Heart right ventricle (tissue), 16 donors: ENCODE measurements at regions of chr15 and their contacts with region 1.

Region 1: GRCh38 chr15:92797168-92797951 is 102.8 kb upstream of the CHD2 start:
- DNase-seq: peak in 1 of 2 donors; percentile 65
- ATAC-seq: peak in 7 of 8 donors; percentile 59 to 76 (median 63)
- H3K4me3 ChIP-seq: no peak overlapping the region
- H3K27ac ChIP-seq: peak overlapping the region in 3 of 10 donors; percentile 38 to 64 (median 49)
- H3K4me1 ChIP-seq: peaks cover 0 to 20% (median 10%) of the 10 kb centered on the region in 9 donors
- H3K27me3 ChIP-seq: no peaks in the 10 kb centered on the region
- CTCF ChIP-seq: peak; percentile 65 to 86 (median 79)

Region 2: DNA sequence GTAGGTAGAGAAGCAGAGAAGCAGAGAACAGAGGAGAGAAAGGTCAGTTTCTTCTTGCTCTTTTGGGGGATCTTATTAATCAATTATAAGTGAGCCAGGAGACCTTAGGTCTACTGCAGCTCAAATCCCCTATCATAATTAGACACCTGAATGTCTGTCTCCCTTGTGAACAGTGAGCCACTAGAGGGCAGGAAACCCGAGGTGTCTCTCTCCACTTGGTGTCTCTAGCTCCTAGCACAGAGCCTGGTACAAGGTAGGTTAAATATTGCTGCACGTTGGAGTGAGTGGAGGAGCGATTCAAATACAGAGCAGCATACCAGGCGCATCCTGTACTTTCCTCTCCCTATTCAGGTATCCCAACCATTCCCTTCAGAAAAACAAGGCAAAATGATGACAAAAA is 405.7 kb before region 1 on chr15:
- intact Hi-C with region 1: no loop called
- DNase-seq: no peak
- ATAC-seq: peak in 5 of 8 donors; percentile 45 to 60 (median 53)
- H3K4me3 ChIP-seq: no peak overlapping the region
- H3K27ac ChIP-seq: no peak overlapping the region
- H3K4me1 ChIP-seq: peaks cover 0 to 22% (median 6%) of the 10 kb centered on the region in 9 donors
- H3K27me3 ChIP-seq: peaks cover 3 to 89% (median 63%) of the 10 kb centered on the region in 7 donors
- CTCF ChIP-seq: peak in 7 of 9 donors; percentile 36 to 60 (median 46)

Region 3: GRCh38 chr15:92917606-92918407 is 120.4 kb after region 1 on chr15:
- intact Hi-C with region 1: loop called in 5 of 10 experiments (anchors 2 to 5 kb)
- DNase-seq: peak; percentile 86 to 97
- ATAC-seq: peak; percentile 55 to 85 (median 80)
- H3K4me3 ChIP-seq: peak overlapping the region in 6 of 10 donors; percentile 7 to 31 (median 22)
- H3K27ac ChIP-seq: peak overlapping the region; percentile 30 to 95 (median 80)
- H3K4me1 ChIP-seq: peaks cover 4 to 100% (median 94%) of the 10 kb centered on the region in 9 donors
- H3K27me3 ChIP-seq: no peaks in the 10 kb centered on the region
- CTCF ChIP-seq: peak; percentile 88 to 95 (median 90)

Region 4: DNA sequence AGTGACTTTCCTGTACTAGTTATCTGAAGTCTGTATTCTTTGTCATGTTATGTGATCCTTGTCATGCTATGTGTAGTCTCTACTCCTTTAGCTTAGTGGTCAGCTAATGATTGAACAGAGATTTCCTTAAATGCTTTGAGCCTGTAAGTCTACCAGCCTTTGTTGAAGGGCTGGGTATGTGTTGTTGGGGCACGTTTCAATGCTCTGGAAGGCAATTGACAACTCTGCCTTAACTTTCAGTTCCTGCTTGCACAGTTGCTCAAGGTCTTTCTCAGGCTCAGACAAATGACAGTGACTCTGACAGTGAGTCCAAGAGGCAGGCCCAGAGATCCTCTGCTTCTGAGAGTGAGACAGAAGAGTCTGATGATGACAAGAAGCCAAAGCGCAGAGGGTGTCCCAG is 192.1 kb after region 1 on chr15:
- intact Hi-C with region 1: loop called in 1 of 10 experiments (anchors 10 kb)
- DNase-seq: no peak
- ATAC-seq: peak in 2 of 8 donors; percentile 13 to 33
- H3K4me3 ChIP-seq: no peak overlapping the region
- H3K27ac ChIP-seq: no peak overlapping the region
- H3K4me1 ChIP-seq: peaks cover 0 to 11% (median 0%) of the 10 kb centered on the region in 9 donors
- H3K27me3 ChIP-seq: no peaks in the 10 kb centered on the region
- CTCF ChIP-seq: no peak

Region 5: GRCh38 chr15:93030430-93031105 is 233.2 kb after region 1 on chr15:
- intact Hi-C with region 1: loop called in 1 of 10 experiments (anchors 10 kb)
- DNase-seq: peak; percentile 55 to 75
- ATAC-seq: peak; percentile 49 to 78 (median 74)
- H3K4me3 ChIP-seq: no peak overlapping the region
- H3K27ac ChIP-seq: peak overlapping the region in 9 of 10 donors; percentile 51 to 91 (median 85)
- H3K4me1 ChIP-seq: peaks cover 24 to 55% (median 48%) of the 10 kb centered on the region in 9 donors
- H3K27me3 ChIP-seq: no peaks in the 10 kb centered on the region
- CTCF ChIP-seq: peak; percentile 75 to 92 (median 89)